ENCODE measurements at regions of chr12 and their contacts with region 1.

Region 1: DNA sequence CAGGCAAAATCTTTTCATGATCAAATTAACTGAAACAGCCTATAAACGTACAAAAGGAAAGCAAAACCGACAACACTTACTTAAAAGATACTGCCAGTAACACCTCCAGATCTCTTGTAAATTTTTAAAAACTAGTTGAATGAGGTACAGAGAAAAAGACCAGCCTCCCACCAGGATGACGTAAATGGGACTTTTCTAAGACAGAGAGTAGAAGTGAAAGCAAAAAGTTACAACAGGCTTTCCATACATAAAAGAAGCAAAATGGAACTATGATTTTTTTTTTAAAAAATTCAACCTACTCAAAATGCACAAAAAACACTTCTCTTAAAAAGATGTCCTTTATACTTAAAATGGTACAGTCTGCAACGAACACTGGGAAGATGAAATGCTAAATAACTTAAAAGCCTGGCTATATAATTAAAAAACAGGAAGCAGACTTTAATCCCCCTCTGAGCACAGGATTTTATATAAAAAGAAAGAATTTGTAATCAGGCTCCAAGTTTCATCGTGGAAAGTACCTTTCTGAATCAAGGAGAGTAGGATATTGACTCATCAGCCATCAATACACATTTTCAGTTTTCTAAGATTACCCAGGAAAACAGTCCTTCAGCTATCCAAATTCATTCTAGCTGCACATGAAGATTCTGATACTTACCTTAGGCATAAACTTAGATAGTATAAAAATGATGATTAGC is 14.2 kb upstream of the MYO1A start:
- DNase-seq: no peak
- ATAC-seq: no peak
- H3K4me3 ChIP-seq: no peak overlapping the region
- H3K27ac ChIP-seq: no peak overlapping the region
- H3K4me1 ChIP-seq: no peaks in the 10 kb centered on the region
- H3K27me3 ChIP-seq: no peaks in the 10 kb centered on the region
- CTCF ChIP-seq: no peak
- POLR2A ChIP-seq: no peak
- RAD21 ChIP-seq: no peak

Region 2: DNA sequence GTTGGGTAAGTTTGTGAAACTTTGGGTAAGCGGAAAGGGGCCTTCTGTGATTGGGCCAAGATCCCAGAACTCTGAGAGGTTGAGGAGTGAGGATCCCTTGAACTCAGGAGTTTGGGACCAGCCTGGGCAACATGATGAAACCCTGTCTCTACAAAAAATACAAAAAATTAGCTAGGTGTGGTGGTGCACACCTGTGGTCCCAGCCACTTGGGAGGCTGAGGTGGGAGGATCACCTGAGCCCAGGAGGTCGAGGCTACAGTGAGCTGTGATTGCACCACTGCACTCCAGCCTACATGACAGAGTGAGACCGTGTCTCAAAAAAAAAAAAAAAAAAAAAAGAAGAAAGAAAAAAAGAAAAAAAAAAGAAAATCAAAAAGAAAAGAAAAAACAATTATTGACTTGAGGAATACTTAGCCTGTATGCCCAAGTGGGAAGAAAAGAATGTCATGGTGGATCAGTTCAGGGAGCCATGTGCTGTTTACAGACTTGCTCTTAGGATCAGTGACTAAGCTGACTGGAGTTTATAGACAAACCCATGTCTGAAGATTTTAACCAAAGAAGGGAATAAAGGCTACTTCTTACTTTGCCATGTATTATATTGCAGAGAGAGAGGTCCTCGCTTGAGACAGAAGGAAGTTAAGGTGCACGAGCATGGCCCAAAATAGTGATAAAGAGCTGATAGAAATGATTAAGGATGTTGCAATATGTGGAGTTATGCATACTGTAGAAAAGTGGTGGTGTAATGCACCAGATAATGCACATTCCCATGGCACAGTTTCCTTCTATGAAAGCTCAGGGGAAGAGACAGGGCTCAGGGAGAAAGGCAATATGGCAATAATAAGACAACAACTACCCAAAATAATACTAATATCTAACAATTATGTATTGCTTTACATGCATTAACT is 300.1 kb before region 1 on chr12:
- CTCF ChIA-PET with region 1: no interaction called
- POLR2A ChIA-PET with region 1: no interaction called
- RAD21 ChIA-PET with region 1: no interaction called
- intact Hi-C with region 1: loop called (anchors 5 kb)
- DNase-seq: no peak
- ATAC-seq: no peak
- H3K4me3 ChIP-seq: no peak overlapping the region
- H3K27ac ChIP-seq: no peak overlapping the region
- H3K4me1 ChIP-seq: no peaks in the 10 kb centered on the region
- H3K27me3 ChIP-seq: no peaks in the 10 kb centered on the region
- CTCF ChIP-seq: no peak
- POLR2A ChIP-seq: no peak
- RAD21 ChIP-seq: no peak

Measured in HCT116 (cell line).